ENCODE measurements at regions of chr3 and their contacts with region 1.

Region 1: DNA sequence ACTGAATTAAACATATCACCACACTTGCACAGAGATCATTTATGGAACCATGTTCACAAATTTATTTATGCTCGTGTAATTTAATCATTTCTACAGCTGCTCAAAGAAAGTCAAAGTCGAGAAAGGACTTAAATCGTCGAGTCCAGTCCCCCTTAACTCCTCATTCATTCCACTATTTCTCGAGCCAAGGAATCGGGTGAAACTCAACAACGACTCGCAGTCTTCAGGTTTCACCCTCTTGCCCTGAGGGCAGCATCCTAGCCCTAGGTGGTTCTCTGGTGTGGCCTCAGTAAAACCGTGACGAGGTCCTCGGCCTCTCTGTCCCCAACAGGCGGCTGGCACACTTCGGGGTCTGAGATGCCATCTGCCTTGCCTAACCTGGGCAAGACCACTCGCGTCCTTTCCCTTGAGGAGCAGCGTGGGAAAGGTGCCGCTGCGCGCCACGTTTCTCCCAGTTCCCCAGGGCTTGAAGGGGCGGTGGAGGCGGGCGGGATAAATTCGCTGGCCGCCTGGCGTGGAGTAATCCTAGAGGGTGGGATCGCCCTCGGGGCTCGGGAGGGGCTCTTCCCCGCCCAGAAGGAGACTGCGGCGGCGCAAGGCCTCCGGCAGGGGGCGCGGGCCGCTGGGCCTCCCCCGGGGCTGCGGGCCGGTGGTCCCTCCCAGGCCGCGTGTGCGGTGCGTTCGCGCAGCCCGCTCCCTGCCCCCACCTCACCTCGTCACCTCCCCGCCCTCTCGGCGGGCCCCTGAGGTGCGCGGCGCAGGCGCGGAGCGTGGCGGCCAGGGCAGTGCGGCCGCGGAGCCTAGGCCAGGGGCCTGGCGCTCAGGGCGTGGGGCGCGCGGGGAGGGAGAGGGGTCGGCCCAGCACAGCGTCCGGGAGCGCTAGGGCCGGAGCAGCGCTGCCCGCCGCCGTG is at the start of gene ZNF639:
- DNase-seq: peak; percentile 68
- H3K4me3 ChIP-seq: peak within 1 kb of the TSS; percentile 82
- H3K27ac ChIP-seq: peak within 1 kb of the TSS; percentile 86
- H3K27me3 ChIP-seq: no peaks in the 10 kb centered on the region
- CTCF ChIP-seq: peak; percentile 65
- polyA plus RNA-seq, gene ZNF639: 17.6 and 21.3 TPM in 2 replicates

Region 2: GRCh38 chr3:179015551-179016020 is 307.0 kb before region 1 on chr3:
- CTCF ChIA-PET with region 1: interaction called, 194 read pairs
- POLR2A ChIA-PET with region 1: no interaction called
- DNase-seq: peak; percentile 59
- H3K4me3 ChIP-seq: no peak overlapping the region
- H3K27ac ChIP-seq: no peak overlapping the region
- H3K27me3 ChIP-seq: no peaks in the 10 kb centered on the region
- CTCF ChIP-seq: peak; percentile 84

Region 3: GRCh38 chr3:179063945-179064560 is 258.5 kb before region 1 on chr3:
- CTCF ChIA-PET with region 1: interaction called, 51 read pairs
- POLR2A ChIA-PET with region 1: no interaction called
- DNase-seq: no peak
- H3K4me3 ChIP-seq: no peak overlapping the region
- H3K27ac ChIP-seq: no peak overlapping the region
- H3K27me3 ChIP-seq: no peaks in the 10 kb centered on the region
- CTCF ChIP-seq: no peak

Region 4: DNA sequence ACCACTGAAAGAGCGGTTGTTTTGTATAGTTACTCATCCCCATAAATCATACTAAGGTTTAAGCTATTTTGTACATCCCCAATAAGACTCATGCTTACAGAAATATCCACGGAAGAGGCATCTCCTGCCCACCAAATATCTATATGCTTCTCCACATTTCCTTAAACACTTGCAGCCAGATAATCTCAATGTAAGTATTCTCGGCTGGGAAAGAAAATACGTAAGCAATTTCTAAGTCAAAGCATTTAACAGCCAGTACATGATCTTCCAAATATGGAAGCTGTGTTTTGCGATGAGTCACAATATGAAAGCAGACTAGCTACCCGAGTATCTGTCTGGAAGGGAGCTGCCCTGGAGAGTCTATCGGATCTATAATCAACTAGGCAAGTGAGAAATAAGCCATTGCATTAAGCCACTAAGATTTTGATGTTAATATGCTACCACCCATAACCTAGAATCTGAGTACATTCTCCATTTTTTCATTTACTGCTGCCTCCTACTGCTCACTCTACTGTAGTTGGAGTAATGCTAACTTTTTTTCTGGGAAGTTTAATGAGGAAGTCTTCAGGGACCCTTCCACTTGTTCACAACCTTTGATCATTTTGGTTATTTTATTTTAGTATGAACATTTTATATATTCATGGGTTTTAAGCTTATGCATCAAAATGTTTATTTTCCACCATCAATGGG is 224.0 kb before region 1 on chr3:
- CTCF ChIA-PET with region 1: interaction called, 42 read pairs
- POLR2A ChIA-PET with region 1: no interaction called
- DNase-seq: peak; percentile 33
- H3K4me3 ChIP-seq: peak overlapping the region; percentile 38
- H3K27ac ChIP-seq: no peak overlapping the region
- H3K27me3 ChIP-seq: no peaks in the 10 kb centered on the region
- CTCF ChIP-seq: peak; percentile 42

Region 5: GRCh38 chr3:179147873-179148615 is 174.5 kb before region 1 on chr3 and contains the start of gene PIK3CA:
- CTCF ChIA-PET with region 1: interaction called, 33 read pairs
- POLR2A ChIA-PET with region 1: interaction called, 3 read pairs
- DNase-seq: peak; percentile 97
- H3K4me3 ChIP-seq: peak within 1 kb of the TSS; percentile 78
- H3K27ac ChIP-seq: peak within 1 kb of the TSS; percentile 76
- H3K27me3 ChIP-seq: no peaks in the 10 kb centered on the region
- CTCF ChIP-seq: no peak
- polyA plus RNA-seq, gene PIK3CA: 13.9 and 21.4 TPM in 2 replicates

Region 6: DNA sequence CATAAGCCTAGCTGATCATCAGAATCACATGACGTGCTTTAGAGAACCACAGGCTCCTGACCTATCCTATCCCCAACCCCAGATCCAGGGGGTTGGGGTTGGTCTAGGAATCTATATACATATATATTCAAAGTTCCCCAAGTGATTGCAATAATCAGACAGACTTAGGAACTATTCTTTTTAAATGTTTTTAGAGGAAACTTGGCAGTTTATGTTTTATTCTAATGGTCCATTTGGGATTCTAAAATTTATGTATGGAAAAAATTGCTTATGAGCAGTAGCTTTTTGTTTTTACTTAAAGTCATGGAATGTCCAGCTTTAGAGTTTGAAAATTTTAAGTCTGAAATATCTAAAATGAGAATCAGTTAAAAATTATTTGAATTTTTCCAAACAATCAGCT is 47.1 kb after region 1 on chr3:
- CTCF ChIA-PET with region 1: no interaction called
- POLR2A ChIA-PET with region 1: no interaction called
- DNase-seq: no peak
- H3K4me3 ChIP-seq: no peak overlapping the region
- H3K27ac ChIP-seq: no peak overlapping the region
- H3K27me3 ChIP-seq: no peaks in the 10 kb centered on the region
- CTCF ChIP-seq: no peak

Region 7: DNA sequence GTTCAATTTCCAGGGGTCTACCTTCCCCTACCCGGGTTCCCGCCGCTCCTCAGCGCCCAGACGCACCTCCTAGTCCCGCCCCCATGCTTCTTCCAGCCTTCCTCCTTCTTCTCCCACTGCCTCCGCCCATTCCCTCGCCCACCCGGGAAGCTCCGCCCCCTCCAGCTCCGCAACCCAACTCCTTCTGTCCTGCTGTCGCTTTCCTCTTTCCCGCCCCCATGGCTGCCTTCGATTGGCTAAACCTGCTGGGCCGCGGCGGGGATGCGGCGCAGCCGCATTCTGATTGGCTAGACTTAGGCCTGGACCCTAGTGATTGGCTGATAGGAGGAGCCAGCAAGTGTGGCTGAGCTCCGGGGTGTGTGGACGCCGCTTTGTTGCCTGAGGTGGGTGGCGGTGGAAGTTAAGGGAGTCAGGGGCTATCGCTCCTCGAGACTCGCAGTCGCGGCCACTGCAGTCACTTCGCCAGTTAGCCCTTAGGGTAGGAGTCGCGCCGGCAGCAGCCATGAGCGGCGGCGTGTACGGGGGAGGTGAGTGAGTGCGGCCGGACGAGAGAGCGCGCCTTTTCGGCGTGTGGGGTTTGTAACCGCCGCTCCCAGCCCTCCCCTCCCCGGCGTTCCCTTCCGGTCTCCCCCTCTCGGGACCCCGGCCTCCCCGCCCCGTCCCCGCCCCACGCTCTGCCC is 240.2 kb after region 1 on chr3 and contains the start of gene ACTL6A:
- CTCF ChIA-PET with region 1: interaction called, 16 read pairs
- POLR2A ChIA-PET with region 1: no interaction called
- DNase-seq: peak; percentile 98
- H3K4me3 ChIP-seq: peak within 1 kb of the TSS; percentile 95
- H3K27ac ChIP-seq: peak within 1 kb of the TSS; percentile 82
- H3K27me3 ChIP-seq: no peaks in the 10 kb centered on the region
- CTCF ChIP-seq: no peak
- polyA plus RNA-seq, gene ACTL6A: 55.3 and 67.5 TPM in 2 replicates

Measured in AG04450 (cell line).